ENCODE measurements at regions of chr11 and their contacts with region 1.

Region 1: GRCh38 chr11:59135648-59136461 is 6.8 kb upstream of the FAM111A start:
- DNase-seq: peak; percentile 80 to 93 (median 89)
- ATAC-seq: peak; percentile 100
- H3K4me3 ChIP-seq: no peak overlapping the region
- H3K4me3 Mint-ChIP-seq: peak overlapping the region; percentile 66
- H3K27ac ChIP-seq: peak overlapping the region in 1 of 2 experiments; percentile 23
- H3K27ac Mint-ChIP-seq: peak overlapping the region; percentile 55
- H3K4me1 ChIP-seq: peaks cover 7% of the 10 kb centered on the region
- H3K4me1 Mint-ChIP-seq: peaks cover 8% of the 10 kb centered on the region
- H3K27me3 ChIP-seq: no peaks in the 10 kb centered on the region
- H3K27me3 Mint-ChIP-seq: no peaks in the 10 kb centered on the region
- CTCF ChIP-seq: peak; percentile 98

Region 2: DNA sequence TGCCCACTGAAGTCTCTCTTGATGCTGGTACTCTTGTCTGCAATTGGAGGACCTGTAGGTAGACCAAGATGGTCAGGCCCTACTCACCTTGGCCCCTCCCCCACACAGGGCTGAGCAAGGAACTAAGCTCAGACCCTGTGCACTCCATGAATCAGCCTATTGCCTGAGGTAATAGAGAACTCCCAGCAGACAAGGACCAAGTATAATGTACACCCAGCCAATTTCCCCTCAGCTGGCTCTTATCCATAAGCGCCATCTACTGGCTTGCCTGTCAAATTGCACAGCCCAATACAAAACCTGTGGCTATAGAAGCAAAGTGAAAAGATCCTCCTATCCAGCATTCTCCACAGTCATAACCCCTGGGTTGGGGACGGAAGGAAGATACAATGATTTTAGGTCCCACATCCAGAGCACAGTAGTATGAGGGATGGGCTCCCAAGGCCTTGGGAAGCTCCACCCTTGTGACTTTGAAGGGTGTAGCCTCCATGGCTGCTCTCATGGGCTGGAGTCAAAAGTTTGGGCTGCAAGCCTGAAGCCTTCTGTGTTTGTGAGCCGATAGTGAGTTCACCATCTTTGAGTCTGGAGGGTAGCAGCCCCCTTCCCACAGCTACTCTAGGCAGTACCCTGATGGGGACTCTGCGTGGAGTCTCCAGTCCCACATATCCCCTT is 347.4 kb before region 1 on chr11:
- CTCF ChIA-PET with region 1: no interaction called
- POLR2A ChIA-PET with region 1: no interaction called
- intact Hi-C with region 1: loop called in 1 of 2 experiments (anchors 1 kb)
- DNase-seq: peak in 8 of 9 experiments; percentile 13 to 65 (median 48)
- ATAC-seq: peak; percentile 90
- H3K4me3 ChIP-seq: no peak overlapping the region
- H3K4me3 Mint-ChIP-seq: no peak overlapping the region
- H3K27ac ChIP-seq: no peak overlapping the region
- H3K27ac Mint-ChIP-seq: no peak overlapping the region
- H3K4me1 ChIP-seq: no peaks in the 10 kb centered on the region
- H3K4me1 Mint-ChIP-seq: peaks cover 3% of the 10 kb centered on the region
- H3K27me3 ChIP-seq: no peaks in the 10 kb centered on the region
- H3K27me3 Mint-ChIP-seq: peaks cover 4% of the 10 kb centered on the region
- CTCF ChIP-seq: peak; percentile 91

Region 3: DNA sequence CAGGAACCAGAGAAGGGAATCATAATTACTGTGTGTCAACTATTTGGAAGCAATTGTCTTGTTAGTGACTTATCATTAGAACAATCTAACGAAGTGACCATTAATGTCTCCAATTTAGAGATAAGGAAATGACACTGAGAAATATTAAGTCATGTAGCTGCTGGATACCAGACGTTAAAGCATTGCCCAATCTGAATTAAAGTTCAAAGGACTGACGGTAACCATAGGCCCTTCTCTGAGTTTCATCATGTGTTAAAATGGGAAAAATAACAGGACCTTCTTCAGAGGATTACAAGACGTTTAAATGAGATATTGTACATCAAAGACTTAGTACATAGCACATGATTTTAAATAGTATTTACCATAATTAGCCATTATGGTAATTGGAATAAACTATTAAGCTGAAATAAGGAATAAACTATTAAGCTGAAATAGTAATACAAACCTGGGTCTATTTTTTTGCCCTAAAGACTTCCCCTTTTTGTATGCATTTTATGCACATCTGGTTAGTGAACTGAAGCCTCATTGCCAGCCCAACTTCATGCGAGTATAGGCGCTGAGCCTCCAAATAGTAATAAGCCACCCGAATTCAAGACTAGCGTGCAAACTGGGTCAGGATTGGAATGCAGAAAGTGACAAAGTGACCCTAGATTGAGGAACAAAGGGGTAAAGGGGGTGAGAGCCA is 155.6 kb before region 1 on chr11:
- CTCF ChIA-PET with region 1: no interaction called
- POLR2A ChIA-PET with region 1: no interaction called
- intact Hi-C with region 1: no loop called
- DNase-seq: no peak
- ATAC-seq: no peak
- H3K4me3 ChIP-seq: no peak overlapping the region
- H3K4me3 Mint-ChIP-seq: no peak overlapping the region
- H3K27ac ChIP-seq: no peak overlapping the region
- H3K27ac Mint-ChIP-seq: no peak overlapping the region
- H3K4me1 ChIP-seq: no peaks in the 10 kb centered on the region
- H3K4me1 Mint-ChIP-seq: no peaks in the 10 kb centered on the region
- H3K27me3 ChIP-seq: no peaks in the 10 kb centered on the region
- H3K27me3 Mint-ChIP-seq: no peaks in the 10 kb centered on the region
- CTCF ChIP-seq: no peak

Region 4: GRCh38 chr11:59053387-59053786 is 82.5 kb before region 1 on chr11:
- CTCF ChIA-PET with region 1: interaction called, 39 read pairs
- POLR2A ChIA-PET with region 1: interaction called, 3 read pairs
- intact Hi-C with region 1: loop called (anchors 1 kb)
- DNase-seq: peak; percentile 56 to 84 (median 80)
- ATAC-seq: peak; percentile 73
- H3K4me3 ChIP-seq: no peak overlapping the region
- H3K4me3 Mint-ChIP-seq: no peak overlapping the region
- H3K27ac ChIP-seq: no peak overlapping the region
- H3K27ac Mint-ChIP-seq: no peak overlapping the region
- H3K4me1 ChIP-seq: no peaks in the 10 kb centered on the region
- H3K4me1 Mint-ChIP-seq: peaks cover 6% of the 10 kb centered on the region
- H3K27me3 ChIP-seq: no peaks in the 10 kb centered on the region
- H3K27me3 Mint-ChIP-seq: peaks cover 15% of the 10 kb centered on the region
- CTCF ChIP-seq: peak; percentile 73

Region 5: DNA sequence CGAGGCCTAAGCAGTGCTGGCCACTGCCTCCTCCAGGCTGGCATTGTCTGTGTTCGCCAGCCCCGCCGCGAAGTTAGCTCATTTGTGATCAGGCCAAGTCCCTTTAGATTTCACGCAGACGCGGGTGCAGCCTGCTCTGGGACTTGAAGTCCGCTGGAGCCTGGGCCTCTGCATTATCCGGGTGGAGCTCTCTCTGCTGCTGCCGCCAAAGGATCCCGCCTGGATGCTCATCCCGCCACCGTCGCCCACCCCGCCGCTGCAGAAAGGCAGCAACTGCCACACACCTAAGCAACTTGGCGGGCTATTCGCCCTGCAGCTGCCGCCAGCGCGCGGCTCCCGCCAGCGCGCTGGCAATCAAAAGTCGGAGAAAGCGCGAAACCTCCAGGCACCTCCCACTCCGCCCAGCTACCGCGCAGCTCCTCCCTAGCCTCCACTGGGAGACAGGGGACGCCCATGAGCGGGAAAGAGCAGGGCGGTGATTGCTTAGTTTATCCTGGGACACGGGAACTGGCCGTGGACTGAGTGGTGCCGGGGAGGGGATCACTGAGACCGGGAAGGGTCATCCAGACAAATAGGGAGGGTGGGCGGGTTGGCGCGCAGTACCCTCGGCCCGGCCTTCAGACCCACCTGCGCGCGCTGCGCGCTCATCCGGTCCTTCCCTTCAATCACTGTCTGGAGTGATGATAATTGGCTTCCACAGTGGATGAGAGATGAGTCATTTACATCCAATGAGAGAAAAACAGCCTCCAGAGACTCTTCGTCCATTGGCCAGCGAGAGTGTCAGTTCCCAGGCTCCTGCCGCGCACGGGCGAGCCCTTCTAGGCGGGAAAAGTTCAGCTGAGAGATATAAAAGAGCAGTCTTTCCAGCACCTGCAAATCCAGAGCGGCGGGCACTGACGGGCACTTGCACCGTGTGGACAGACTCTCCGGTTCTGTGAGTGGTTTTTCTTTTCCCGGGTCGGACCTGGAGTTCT is 29.2 kb before region 1 on chr11 and contains the start of gene FAM111B:
- CTCF ChIA-PET with region 1: interaction called, 21 read pairs
- POLR2A ChIA-PET with region 1: no interaction called
- intact Hi-C with region 1: no loop called
- DNase-seq: peak; percentile 8 to 78 (median 41)
- ATAC-seq: peak; percentile 82
- H3K4me3 ChIP-seq: peak within 1 kb of the TSS; percentile 46 to 56
- H3K4me3 Mint-ChIP-seq: peak within 1 kb of the TSS; percentile 84
- H3K27ac ChIP-seq: no peak within 1 kb of the TSS
- H3K27ac Mint-ChIP-seq: peak within 1 kb of the TSS; percentile 15
- H3K4me1 ChIP-seq: peaks cover 13% of the 10 kb centered on the region
- H3K4me1 Mint-ChIP-seq: peaks cover 25% of the 10 kb centered on the region
- H3K27me3 ChIP-seq: peaks cover 0 to 5% of the 10 kb centered on the region in 2 experiments
- H3K27me3 Mint-ChIP-seq: peaks cover 37% of the 10 kb centered on the region
- CTCF ChIP-seq: no peak
- total RNA-seq, gene FAM111B: 0.22 to 0.57 TPM

Region 6: GRCh38 chr11:59152312-59152951 is 16.6 kb after region 1 on chr11:
- CTCF ChIA-PET with region 1: interaction called, 73 read pairs
- POLR2A ChIA-PET with region 1: no interaction called
- intact Hi-C with region 1: no loop called
- DNase-seq: no peak
- ATAC-seq: no peak
- H3K4me3 ChIP-seq: no peak overlapping the region
- H3K4me3 Mint-ChIP-seq: peak overlapping the region; percentile 16
- H3K27ac ChIP-seq: peak overlapping the region in 1 of 2 experiments; percentile 36
- H3K27ac Mint-ChIP-seq: peak overlapping the region; percentile 20
- H3K4me1 ChIP-seq: no peaks in the 10 kb centered on the region
- H3K4me1 Mint-ChIP-seq: peaks cover 15% of the 10 kb centered on the region
- H3K27me3 ChIP-seq: no peaks in the 10 kb centered on the region
- H3K27me3 Mint-ChIP-seq: no peaks in the 10 kb centered on the region
- CTCF ChIP-seq: no peak